ENCODE measurements at regions of chr11 and their contacts with region 1.

Region 1: GRCh38 chr11:125514336-125515101 is 18.5 kb upstream of the FEZ1 start:
- DNase-seq: peak; percentile 98
- H3K4me3 ChIP-seq: no peak overlapping the region
- H3K27ac ChIP-seq: peak overlapping the region; percentile 88
- H3K4me1 ChIP-seq: peaks cover 15% of the 10 kb centered on the region
- H3K27me3 ChIP-seq: no peaks in the 10 kb centered on the region
- CTCF ChIP-seq: no peak

Region 2: DNA sequence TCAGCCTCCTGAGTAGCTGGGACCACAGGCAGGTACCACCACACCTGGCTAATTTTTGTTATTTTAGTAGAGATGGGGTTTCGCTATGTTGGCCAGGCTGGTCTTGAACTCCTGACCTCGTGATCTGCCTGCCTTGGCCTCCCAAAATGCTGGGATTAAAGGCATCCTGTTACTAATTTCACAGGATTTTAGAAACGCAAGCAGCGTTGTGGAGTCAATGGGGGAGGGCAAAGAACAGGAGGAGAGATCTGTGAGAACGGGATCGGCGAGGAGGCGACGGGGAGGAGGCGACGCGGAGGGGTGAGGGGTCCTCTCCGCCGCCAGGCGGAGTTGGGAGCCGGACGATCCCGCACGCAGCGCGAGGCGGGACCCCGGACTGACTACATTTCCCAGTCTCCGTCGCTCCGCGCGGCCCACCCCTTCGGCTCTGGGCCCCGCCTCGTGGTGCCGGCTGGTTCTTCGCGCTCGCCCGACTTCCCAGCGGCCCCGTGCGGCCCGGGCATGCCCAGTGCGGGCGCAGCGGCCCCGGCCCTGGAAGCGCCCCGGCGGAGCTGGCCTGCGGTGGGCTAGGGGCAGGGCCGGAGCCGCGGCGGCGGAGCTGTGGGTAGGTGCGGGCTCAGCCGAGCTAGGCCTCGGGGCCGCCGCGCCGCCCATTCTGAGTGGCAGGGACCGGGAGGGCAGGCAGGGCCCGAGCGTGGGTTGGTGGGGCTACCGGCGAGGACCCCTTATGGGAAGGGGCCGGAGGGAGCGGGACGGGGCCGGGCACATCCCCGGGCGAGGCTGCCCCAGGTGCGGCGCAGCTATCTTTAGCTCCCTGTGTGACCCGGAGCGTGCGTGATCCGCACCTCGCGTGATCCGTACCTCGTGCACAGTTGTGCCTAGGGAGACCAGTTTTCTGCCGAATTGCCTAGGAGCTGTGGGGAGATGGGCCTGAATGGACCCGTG is 54.7 kb after region 1 on chr11 and contains the start of gene EI24:
- CTCF ChIA-PET with region 1: no interaction called
- dilution Hi-C with region 1: no loop called
- in situ Hi-C with region 1: no loop called
- intact Hi-C with region 1: loop called (anchors 1 kb)
- DNase-seq: peak; percentile 90
- H3K4me3 ChIP-seq: peak within 1 kb of the TSS; percentile 57 to 82 (median 77)
- H3K27ac ChIP-seq: peak within 1 kb of the TSS; percentile 78
- H3K4me1 ChIP-seq: peaks cover 9% of the 10 kb centered on the region
- H3K27me3 ChIP-seq: no peaks in the 10 kb centered on the region
- CTCF ChIP-seq: peak; percentile 40 to 78
- total RNA-seq, gene EI24: 127 to 162 TPM